ENCODE measurements at regions of chr6 and their contacts with region 1.

Region 1: DNA sequence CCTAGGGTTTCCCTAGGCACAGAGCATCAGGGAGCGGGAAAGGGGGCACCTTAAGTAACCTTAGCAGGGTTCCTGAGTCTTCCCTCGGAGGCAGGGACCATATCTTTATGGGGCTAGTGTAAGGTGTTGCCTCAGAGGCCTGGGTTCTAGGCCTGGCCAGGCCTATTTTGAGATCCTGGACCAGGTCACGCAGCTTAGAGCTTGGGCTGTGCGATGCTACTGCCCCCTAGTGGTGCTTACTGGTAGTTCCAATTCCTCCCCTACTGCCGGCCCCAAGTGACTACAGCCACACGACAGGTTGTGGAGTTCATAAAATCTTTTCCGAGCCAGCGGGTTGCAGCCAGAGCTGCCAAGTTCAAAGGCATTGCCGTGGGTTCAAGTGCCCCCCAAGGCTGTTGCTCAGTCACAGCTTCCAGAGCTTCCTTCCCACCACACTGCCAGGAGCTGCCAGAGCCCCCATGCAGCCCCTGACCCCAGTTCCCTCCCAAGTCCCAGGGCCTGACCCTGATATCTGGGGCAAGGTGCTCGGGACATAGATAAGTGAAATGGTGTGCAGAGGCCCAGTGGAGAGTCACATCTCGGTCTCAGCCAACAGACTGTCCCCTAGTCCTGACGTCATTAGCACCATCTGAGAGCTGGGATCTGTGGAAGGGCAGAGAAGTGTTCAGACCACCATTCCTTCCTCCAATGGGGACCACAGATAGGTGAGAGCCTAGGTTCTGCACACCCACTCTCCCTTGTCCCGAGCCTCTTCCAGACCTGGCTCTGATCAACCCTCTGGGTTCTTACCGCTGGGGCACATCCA is 3.3 kb downstream of the LRRC73 start:
- DNase-seq: peak; percentile 90
- ATAC-seq: peak; percentile 85
- H3K4me3 Mint-ChIP-seq: no peak overlapping the region
- H3K27ac Mint-ChIP-seq: peak overlapping the region; percentile 25
- H3K4me1 Mint-ChIP-seq: peaks cover 8% of the 10 kb centered on the region
- H3K27me3 Mint-ChIP-seq: peaks cover 18% of the 10 kb centered on the region
- CTCF ChIP-seq: peak; percentile 89

Region 2: DNA sequence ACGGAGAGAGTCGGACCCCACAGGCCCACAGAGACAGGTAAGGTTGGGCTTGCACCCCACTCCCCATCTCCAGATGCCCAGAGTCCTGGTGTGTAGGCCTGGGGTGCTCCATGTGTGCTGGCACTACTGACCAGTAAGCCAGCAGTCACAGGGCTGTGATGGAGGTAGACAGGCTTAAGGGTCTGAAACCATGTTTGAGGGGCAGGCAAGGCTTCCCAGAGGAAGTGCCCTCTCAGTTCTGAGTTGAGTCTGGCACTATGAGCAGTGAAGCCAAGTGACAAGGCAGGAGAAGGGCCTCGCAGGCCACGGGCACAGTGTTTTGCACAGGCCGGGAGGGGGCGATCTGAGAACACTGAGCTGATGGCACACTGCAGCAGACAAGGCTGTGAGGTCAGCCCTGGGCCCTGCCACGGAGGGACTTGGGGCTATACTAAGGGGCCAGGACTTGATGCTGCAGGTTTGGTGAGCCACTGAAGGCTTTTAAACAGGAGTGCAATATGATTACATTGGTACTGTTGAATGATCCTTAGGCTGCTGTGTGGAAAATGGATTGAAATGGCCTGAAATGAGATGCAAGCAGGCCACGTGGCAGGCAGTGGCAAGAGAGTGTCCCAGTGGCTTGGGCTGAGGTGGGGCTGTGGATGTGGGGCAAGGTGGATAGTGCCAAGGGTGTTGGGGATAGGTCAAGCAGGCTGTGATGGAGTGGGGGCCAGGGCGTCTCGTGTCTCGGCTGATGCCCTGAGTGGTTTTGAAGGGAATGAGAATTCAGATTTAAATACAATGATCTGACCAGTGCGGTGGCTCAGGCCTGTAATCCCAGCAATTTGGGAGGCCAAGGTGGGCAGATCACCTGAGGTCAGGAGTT is 243.3 kb before region 1 on chr6:
- CTCF ChIA-PET with region 1: interaction called, 20 read pairs
- POLR2A ChIA-PET with region 1: no interaction called
- intact Hi-C with region 1: loop called (anchors 5 kb)
- DNase-seq: peak; percentile 87
- ATAC-seq: peak; percentile 100
- H3K4me3 Mint-ChIP-seq: no peak overlapping the region
- H3K27ac Mint-ChIP-seq: no peak overlapping the region
- H3K4me1 Mint-ChIP-seq: no peaks in the 10 kb centered on the region
- H3K27me3 Mint-ChIP-seq: peaks cover 2% of the 10 kb centered on the region
- CTCF ChIP-seq: peak; percentile 81

Region 3: GRCh38 chr6:43297644-43298564 is 209.0 kb before region 1 on chr6 and contains the start of gene SLC22A7:
- CTCF ChIA-PET with region 1: interaction called, 10 read pairs
- POLR2A ChIA-PET with region 1: no interaction called
- intact Hi-C with region 1: no loop called
- DNase-seq: no peak
- ATAC-seq: no peak
- H3K4me3 Mint-ChIP-seq: no peak within 1 kb of the TSS
- H3K27ac Mint-ChIP-seq: no peak within 1 kb of the TSS
- H3K4me1 Mint-ChIP-seq: no peaks in the 10 kb centered on the region
- H3K27me3 Mint-ChIP-seq: peaks cover 2% of the 10 kb centered on the region
- CTCF ChIP-seq: no peak
- total RNA-seq, gene SLC22A7: not detected

Region 4: GRCh38 chr6:43454696-43455530 is 52.0 kb before region 1 on chr6:
- CTCF ChIA-PET with region 1: interaction called, 60 read pairs
- POLR2A ChIA-PET with region 1: interaction called, 4 read pairs
- intact Hi-C with region 1: loop called (anchors 5 kb)
- DNase-seq: peak; percentile 26
- ATAC-seq: peak; percentile 60
- H3K4me3 Mint-ChIP-seq: peak overlapping the region; percentile 71
- H3K27ac Mint-ChIP-seq: no peak overlapping the region
- H3K4me1 Mint-ChIP-seq: peaks cover 11% of the 10 kb centered on the region
- H3K27me3 Mint-ChIP-seq: peaks cover 12% of the 10 kb centered on the region
- CTCF ChIP-seq: peak; percentile 68

Region 5: GRCh38 chr6:43477235-43478007 is 29.4 kb before region 1 on chr6 and contains the start of gene TJAP1:
- CTCF ChIA-PET with region 1: interaction called, 23 read pairs
- POLR2A ChIA-PET with region 1: interaction called, 3 read pairs
- intact Hi-C with region 1: no loop called
- DNase-seq: peak; percentile 98
- ATAC-seq: peak; percentile 100
- H3K4me3 Mint-ChIP-seq: peak within 1 kb of the TSS; percentile 94
- H3K27ac Mint-ChIP-seq: peak within 1 kb of the TSS; percentile 89
- H3K4me1 Mint-ChIP-seq: peaks cover 48% of the 10 kb centered on the region
- H3K27me3 Mint-ChIP-seq: no peaks in the 10 kb centered on the region
- CTCF ChIP-seq: no peak
- total RNA-seq, gene TJAP1: 30.2 to 32.9 TPM

Region 6: GRCh38 chr6:43496370-43497128 is 10.3 kb before region 1 on chr6:
- CTCF ChIA-PET with region 1: interaction called, 78 read pairs
- POLR2A ChIA-PET with region 1: interaction called, 5 read pairs
- intact Hi-C with region 1: no loop called
- DNase-seq: peak; percentile 37
- ATAC-seq: peak; percentile 70
- H3K4me3 Mint-ChIP-seq: no peak overlapping the region
- H3K27ac Mint-ChIP-seq: no peak overlapping the region
- H3K4me1 Mint-ChIP-seq: peaks cover 19% of the 10 kb centered on the region
- H3K27me3 Mint-ChIP-seq: no peaks in the 10 kb centered on the region
- CTCF ChIP-seq: peak; percentile 32